MCF 10A (cell line): ENCODE measurements at regions of chr5 and their contacts with region 1.

Region 1: GRCh38 chr5:172714491-172715421 is 56.2 kb downstream of the DUSP1 start:
- DNase-seq: peak; percentile 99
- H3K4me3 Mint-ChIP-seq: no peak overlapping the region
- H3K27ac Mint-ChIP-seq: peak overlapping the region; percentile 80
- H3K4me1 Mint-ChIP-seq: peaks cover 40% of the 10 kb centered on the region
- H3K27me3 Mint-ChIP-seq: no peaks in the 10 kb centered on the region
- CTCF ChIP-seq: peak; percentile 97

Region 2: DNA sequence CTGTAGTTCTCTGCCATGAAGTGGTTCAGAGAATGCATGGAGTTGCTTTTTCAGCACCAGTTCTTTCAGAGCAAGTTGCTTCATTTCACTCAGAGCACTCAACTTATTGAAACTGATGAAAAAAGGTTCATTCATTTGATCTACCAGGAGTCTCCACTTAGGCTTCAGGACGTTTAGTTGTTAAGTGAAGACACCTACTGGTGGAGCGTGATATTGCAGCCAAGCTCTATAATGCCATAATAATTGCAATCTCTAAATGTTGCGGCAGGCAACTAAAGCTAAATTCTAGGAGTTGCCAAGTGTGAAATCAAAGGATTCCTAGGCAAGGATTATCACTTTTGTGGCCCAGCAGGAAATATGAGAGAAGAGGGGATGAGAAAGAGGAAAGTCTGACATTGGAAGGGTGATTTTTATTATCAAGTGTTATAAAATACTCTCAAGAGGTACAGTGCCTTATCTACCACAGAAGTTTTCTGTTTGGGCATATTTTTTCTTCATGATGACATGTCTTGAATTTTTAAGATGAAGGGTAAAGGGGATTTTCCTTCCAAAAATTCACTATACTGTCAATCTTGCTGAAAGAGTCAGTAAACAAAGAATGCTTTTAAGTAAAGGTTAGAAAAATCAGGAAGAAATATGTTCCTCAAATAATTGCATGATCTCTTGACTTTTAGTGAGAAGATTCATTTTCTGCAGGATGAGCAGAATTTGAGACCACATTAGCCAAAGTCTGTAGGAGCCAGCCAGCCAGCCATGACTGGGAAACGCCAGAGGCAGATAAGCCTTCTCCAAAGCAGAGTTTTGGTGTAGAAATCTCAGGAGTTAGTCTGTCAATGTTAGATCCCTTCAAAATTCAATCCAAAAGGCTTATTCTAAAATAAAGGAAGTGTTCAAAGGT is 343.9 kb before region 1 on chr5:
- CTCF ChIA-PET with region 1: no interaction called
- POLR2A ChIA-PET with region 1: no interaction called
- intact Hi-C with region 1: no loop called
- DNase-seq: peak; percentile 64
- H3K4me3 Mint-ChIP-seq: no peak overlapping the region
- H3K27ac Mint-ChIP-seq: no peak overlapping the region
- H3K4me1 Mint-ChIP-seq: peaks cover 4% of the 10 kb centered on the region
- H3K27me3 Mint-ChIP-seq: no peaks in the 10 kb centered on the region
- CTCF ChIP-seq: peak; percentile 73

Region 3: DNA sequence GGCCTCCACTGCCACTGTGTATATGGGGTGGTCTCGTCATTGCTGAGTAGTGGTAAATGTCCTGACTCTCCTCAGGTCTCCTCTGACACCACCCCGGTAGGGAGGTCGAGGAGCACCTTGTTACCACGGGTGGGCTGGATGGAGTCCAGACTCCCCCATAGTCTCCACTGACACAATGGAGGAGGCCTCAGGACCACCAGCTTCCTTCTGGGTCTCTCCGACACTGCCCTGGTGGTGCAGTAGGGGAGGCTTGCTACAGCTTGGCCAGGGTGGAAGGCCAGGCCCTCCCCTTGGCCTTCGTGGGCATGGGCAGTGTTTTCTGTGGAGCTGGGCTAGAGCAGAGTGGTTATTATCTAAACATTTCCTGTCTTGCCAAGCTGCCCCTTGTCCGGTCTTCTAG is 245.1 kb before region 1 on chr5:
- CTCF ChIA-PET with region 1: no interaction called
- POLR2A ChIA-PET with region 1: no interaction called
- intact Hi-C with region 1: no loop called
- DNase-seq: no peak
- H3K4me3 Mint-ChIP-seq: no peak overlapping the region
- H3K27ac Mint-ChIP-seq: no peak overlapping the region
- H3K4me1 Mint-ChIP-seq: no peaks in the 10 kb centered on the region
- H3K27me3 Mint-ChIP-seq: peaks cover 15% of the 10 kb centered on the region
- CTCF ChIP-seq: no peak

Region 4: DNA sequence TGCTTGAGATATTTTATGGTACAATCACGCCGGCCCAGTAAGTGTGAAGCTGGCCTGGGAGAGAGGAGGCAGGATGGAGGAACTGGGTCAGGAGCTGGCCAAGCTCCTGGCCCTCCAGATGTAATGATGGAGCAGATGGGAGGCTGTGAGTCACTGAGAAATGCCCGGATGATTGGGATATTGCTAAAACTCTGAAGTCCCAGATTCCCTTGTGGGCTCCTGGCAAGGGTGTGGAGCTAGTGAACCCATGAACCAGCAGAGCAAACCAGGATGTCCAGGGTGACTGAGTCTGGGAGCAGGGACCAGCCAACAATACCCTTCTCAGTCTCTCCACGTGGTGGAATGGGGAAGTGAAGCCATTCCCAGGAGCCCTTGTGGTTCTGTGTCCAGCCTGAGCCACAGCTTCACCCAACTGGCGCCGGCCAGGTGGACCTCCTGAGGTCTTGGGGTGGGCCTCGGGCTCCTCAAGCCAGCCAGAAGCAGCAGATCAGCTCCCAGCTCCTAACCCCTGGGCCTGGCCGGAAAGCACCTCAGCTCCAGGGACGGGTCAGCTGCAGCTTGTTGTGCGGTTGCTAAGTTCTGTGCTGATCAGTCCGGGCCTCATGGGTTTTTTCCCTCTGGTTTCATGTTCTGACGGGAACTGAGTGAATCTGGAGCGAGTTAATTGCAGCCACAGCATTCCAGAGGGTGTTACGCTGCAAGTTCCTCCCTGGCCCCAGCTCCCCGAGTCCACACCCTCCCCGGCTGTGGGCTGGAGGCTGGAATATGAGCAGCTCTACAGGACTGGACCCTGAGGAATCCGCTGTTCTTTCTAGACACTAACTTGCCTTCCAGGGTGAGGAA is 18.6 kb after region 1 on chr5:
- CTCF ChIA-PET with region 1: interaction called, 51 read pairs
- POLR2A ChIA-PET with region 1: interaction called, 17 read pairs
- intact Hi-C with region 1: loop called (anchors 1 kb)
- DNase-seq: peak; percentile 93
- H3K4me3 Mint-ChIP-seq: peak overlapping the region; percentile 63
- H3K27ac Mint-ChIP-seq: peak overlapping the region; percentile 99
- H3K4me1 Mint-ChIP-seq: peaks cover 44% of the 10 kb centered on the region
- H3K27me3 Mint-ChIP-seq: no peaks in the 10 kb centered on the region
- CTCF ChIP-seq: peak; percentile 18

Region 5: DNA sequence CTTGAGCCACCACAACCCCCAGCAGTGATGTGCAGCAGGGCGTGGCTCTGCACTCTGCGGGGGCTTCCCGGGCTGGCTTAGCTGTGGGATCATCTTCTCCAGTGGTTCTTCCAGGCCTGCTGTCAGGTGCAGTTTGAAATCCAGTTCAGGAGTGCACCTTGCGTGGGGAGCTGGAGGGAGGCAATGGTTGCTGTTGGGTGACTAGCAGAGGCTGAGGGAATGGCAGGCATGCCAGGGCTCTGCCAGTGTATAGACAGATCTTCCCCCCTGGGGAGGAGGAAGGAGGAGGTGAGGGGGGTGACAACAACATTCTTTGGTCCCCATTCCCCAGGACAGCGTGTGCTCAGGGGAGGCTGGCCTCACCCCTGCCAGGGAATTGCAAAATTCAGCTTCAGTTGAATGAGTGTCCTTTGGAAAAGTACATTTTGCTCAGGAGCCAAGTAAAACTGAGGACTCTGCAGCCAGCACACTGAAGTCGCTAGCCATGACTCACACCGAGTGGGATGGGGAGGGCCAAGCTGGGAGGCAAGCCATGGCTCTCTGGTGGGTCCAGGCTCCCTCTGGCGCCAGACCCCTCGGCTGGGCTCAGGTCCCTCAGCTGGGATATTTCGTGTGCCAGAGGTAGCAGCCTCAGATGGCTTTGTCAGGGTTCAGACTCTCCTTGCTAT is 154.3 kb after region 1 on chr5:
- CTCF ChIA-PET with region 1: interaction called, 6 read pairs
- POLR2A ChIA-PET with region 1: interaction called, 9 read pairs
- intact Hi-C with region 1: loop called (anchors 1 kb)
- DNase-seq: peak; percentile 99
- H3K4me3 Mint-ChIP-seq: no peak overlapping the region
- H3K27ac Mint-ChIP-seq: no peak overlapping the region
- H3K4me1 Mint-ChIP-seq: peaks cover 15% of the 10 kb centered on the region
- H3K27me3 Mint-ChIP-seq: no peaks in the 10 kb centered on the region
- CTCF ChIP-seq: no peak

Region 6: GRCh38 chr5:172902497-172903200 is 187.9 kb after region 1 on chr5:
- CTCF ChIA-PET with region 1: interaction called, 25 read pairs
- POLR2A ChIA-PET with region 1: interaction called, 25 read pairs
- intact Hi-C with region 1: no loop called
- DNase-seq: peak; percentile 75
- H3K4me3 Mint-ChIP-seq: peak overlapping the region; percentile 45
- H3K27ac Mint-ChIP-seq: peak overlapping the region; percentile 98
- H3K4me1 Mint-ChIP-seq: peaks cover 82% of the 10 kb centered on the region
- H3K27me3 Mint-ChIP-seq: no peaks in the 10 kb centered on the region
- CTCF ChIP-seq: peak; percentile 27

Region 7: DNA sequence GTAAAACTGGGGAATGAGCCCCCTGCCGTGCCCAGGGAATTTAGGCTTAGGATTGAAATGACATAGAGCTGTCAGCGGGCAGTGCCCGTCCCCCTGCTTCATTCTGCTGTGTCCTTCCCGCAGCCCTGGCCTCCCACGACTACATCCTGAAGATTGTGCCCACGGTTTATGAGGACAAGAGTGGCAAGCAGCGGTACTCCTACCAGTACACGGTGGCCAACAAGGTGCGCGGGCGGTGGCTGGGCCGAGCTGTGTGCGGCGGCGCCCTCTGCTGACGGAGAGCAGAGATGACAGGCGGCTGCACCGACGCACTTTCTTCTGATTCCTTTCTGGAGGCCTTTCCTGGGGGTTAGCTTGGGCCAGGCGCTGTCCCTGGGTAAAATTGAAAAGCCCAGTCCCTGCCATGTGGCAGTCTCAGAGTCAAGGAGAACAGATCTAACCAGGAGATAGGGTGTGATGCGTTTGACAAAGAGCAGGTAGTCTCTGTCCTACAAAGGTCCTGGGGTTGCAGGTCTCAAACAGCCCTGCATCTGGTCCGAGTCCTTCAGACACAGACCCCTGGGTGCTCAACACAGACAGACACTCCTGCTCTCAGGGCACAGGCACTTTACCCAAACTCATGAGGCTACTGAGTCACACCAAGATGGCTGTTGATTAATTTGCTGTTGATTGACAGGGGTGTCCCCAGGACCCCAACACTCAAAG is 217.7 kb after region 1 on chr5:
- CTCF ChIA-PET with region 1: interaction called, 604 read pairs
- POLR2A ChIA-PET with region 1: interaction called, 21 read pairs
- intact Hi-C with region 1: loop called (anchors 1 kb)
- DNase-seq: peak; percentile 82
- H3K4me3 Mint-ChIP-seq: peak overlapping the region; percentile 28
- H3K27ac Mint-ChIP-seq: peak overlapping the region; percentile 90
- H3K4me1 Mint-ChIP-seq: peaks cover 28% of the 10 kb centered on the region
- H3K27me3 Mint-ChIP-seq: no peaks in the 10 kb centered on the region
- CTCF ChIP-seq: peak; percentile 100

Region 8: GRCh38 chr5:173057062-173057924 is 342.5 kb after region 1 on chr5:
- CTCF ChIA-PET with region 1: interaction called, 3 read pairs
- POLR2A ChIA-PET with region 1: interaction called, 5 read pairs
- intact Hi-C with region 1: loop called (anchors 1 kb)
- DNase-seq: peak; percentile 100
- H3K4me3 Mint-ChIP-seq: peak overlapping the region; percentile 99
- H3K27ac Mint-ChIP-seq: peak overlapping the region; percentile 80
- H3K4me1 Mint-ChIP-seq: peaks cover 16% of the 10 kb centered on the region
- H3K27me3 Mint-ChIP-seq: no peaks in the 10 kb centered on the region
- CTCF ChIP-seq: no peak

Region 9: DNA sequence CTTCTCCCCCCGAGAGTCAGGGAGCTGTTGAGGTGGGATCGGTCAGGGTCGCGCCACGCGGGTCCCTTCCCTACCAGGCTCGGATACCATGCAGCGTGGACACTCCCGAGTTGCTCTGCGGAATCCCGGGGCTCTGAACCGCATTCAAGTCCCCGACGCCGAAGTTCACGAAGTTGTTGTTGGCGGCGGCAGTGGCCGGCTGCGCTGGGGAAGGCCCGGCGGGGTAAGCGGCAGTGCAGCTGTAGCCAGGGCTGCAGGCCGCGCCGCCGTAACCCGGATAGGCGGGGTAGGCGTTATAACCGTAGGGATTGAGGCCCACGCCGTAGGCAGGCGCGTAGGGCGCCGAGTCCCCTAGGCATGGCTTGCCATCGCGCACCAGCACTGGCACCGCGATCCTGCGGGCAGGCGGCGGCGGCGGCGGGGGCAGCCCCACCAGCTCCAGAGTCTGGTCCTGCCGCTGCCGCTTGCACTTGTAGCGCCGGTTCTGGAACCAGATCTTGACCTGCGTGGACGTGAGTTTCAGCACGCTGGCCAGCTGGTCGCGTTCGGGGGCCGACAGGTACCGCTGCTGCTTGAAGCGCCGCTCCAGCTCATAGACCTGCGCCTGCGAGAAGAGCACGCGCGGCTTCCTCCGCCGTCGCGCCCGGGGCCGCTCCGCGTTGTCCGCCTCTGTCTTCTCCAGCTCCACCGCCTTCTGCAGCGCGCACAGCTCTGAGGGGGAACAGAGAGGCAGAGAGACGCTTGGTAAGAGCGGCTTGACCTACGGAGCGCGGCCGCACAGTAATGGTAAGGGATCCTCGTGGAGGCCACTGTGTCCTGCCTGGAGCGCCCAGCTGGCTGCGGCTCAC is 518.0 kb after region 1 on chr5:
- CTCF ChIA-PET with region 1: no interaction called
- POLR2A ChIA-PET with region 1: no interaction called
- intact Hi-C with region 1: no loop called
- DNase-seq: no peak
- H3K4me3 Mint-ChIP-seq: peak overlapping the region; percentile 83
- H3K27ac Mint-ChIP-seq: no peak overlapping the region
- H3K4me1 Mint-ChIP-seq: peaks cover 8% of the 10 kb centered on the region
- H3K27me3 Mint-ChIP-seq: peaks cover 7% of the 10 kb centered on the region
- CTCF ChIP-seq: no peak